Astrocyte of the cerebellum (primary cell): ENCODE measurements at regions of chr16 and their contacts with region 1.

Region 1: DNA sequence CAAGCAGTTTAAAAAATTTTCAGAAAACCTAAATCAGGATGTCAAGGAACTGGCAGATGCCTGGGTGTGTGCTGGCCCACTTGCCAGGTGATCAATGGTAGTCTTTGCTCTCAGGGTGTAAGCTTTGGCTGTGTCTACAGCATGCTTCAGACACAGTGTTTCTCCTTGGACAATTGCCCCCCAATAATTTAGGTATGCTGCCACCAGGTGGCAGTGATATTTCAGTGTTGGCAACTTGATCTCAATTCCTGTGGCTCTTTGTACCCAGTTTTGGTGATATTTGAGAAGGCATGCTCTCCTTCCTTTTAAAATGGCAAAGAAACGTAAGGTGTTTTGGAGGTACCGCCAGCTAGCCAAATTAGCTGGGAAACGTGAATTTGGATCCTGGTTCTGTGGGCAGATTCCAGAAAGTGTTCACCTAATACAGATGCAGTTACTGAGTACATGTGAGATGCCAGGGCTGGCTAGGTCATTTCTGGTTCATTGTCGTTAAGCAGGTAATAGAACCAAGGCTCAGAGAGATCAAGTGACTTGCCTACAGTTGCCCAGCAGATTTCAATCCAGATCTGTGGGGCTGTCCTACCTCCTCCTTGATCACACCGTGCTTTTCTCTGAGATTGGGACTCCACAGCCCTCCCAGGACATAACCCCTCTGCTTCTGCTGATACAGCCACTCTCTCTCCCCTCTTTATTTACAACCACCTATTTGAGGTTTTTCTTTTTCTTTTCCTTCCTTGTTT is 155.6 kb upstream of the PLCG2 start:
- DNase-seq: no peak
- H3K4me3 ChIP-seq: no peak overlapping the region
- CTCF ChIP-seq: peak; percentile 58

Region 2: DNA sequence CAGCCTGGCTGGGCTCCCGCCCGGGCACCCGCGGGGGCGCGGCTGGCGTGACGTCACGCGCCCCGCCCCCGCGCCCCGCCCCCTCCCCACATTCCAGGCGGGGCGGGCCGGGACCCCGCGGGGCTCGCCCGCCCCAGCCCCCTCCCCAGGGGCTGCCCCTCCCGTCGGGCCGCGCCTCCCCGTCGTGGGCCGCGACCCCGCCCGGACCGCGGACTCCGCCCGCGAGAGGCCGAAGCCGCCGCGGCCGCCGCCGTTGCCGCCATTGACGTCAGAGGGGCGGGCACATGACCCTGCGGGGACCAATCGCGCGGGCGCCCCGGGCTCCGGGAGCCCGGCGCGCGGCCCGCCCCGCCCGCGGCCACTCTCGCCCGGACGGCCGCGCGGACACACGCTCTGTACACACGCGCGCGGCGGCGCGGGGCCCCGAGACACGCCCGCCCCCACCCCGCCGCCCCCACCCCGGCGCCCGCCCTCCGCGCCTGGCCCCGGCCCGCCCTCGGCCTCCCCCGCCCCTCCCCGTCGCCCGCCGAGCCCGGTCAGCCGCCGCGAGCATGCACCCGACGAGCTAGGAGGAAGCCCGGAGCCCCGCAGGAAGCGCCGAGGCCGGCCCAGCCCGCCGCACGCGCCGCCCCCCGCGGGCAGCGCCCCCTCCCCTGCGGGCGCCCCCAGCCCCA is 178.9 kb before region 1 on chr16 and contains the start of gene CMIP:
- in situ Hi-C with region 1: no loop called
- DNase-seq: peak; percentile 43
- H3K4me3 ChIP-seq: peak within 1 kb of the TSS; percentile 86
- CTCF ChIP-seq: no peak

Region 3: GRCh38 chr16:81544664-81545271 is 78.8 kb before region 1 on chr16:
- in situ Hi-C with region 1: loop called (anchors 5 kb)
- DNase-seq: peak; percentile 35
- H3K4me3 ChIP-seq: no peak overlapping the region
- CTCF ChIP-seq: no peak

Region 4: DNA sequence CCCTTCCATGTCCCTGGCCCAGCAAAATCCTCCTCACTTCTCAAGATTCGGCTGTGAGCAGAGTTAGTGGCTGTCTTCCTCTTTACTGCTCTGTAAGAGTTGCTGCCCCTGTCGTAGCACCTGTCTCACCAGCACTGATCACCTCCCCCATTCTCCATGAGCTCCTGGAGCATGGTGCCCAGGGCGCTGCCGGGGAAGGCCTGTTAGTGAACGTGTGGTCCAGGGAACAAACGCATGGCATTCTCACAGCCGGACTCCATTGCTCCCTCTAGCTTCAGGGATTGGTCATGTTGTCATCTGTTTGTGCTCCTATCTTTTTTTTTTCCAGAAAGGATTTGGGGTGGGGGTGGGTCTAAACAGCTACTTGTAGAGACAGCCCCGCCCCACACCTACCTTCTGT is 37.7 kb before region 1 on chr16:
- in situ Hi-C with region 1: loop called (anchors 5 kb)
- DNase-seq: no peak
- H3K4me3 ChIP-seq: no peak overlapping the region
- CTCF ChIP-seq: no peak

Region 5: DNA sequence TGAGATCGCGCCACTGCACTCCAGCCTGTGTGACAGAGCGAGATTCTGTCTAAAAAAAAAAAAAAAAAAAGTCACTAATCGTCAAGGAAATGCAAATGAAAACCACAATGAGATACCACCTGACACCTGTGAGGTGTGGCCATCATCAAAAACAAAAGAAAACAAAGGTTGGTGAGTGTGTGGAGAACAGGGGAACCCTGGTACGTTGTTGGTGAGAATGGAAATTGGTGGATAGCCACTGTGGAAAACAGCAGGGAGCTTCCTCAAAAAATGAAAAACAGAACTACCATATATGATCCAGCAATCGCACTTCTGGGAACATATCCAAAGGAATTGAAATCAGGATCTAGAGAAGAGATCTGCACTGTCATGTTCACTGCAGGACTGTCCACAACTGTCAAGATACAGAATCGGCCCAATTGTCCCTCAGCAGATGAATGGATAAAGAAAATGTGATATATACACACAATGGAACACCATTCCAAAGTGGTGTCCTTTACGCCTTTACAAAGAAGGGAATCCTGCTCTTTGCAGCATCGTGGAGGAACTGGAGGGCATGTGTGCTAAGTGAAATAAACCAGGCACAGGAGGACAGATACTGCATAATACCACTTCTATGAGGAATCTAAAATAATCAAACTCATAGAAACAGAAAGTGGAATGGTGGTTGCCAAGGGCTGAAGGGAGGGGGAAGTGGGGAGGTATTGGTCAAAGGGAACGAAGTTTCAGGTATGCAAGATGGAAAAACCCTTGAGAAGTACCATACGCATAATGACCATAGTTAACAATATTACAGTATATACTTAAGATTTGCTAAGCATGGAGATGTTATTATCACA is 92.0 kb after region 1 on chr16:
- in situ Hi-C with region 1: no loop called
- DNase-seq: no peak
- H3K4me3 ChIP-seq: no peak overlapping the region
- CTCF ChIP-seq: no peak